ENCODE measurements at regions of chr1 and their contacts with region 1.

Region 1: DNA sequence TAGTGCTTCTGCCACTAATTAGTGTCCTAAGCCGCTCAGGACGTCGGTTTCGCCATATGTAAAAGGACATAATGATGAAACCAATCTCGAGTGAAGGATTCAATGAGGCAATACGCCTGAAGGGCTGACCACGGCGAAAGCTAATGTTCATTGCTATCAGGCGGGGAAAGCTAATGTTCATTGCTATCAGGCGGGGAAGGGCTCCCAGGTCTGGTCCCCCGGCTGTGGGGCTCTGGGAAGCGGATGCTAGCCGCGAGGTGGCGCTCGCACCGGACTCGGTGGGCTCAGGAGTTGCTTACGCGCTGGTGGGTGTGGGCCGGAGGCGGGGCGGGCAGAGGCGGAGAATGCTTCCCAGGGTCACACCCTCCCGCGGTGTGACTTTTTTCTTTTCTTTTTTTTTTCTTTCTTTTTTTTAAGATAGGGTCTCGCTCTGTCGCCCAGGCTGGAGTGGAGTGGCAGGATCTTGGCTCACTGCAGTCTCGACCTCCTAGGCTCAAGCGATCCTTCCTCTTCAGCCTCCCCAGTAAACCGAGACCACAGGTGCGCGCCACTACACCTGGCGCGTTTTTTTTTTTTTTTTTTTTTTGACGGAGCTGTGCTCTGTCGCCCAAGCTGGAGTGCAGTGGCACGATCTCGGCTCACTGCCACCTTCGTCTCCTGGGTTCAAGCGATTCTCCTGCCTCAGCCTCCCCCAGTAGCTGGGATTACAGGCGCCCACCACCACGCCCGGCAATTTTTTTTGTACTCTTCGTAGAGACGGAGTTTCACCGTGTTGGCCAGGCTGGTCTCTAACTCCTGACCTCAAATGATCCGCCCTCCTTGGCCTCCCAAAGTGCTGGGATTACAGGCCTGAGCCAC is 1.1 kb upstream of the PEAR1 start:
- DNase-seq: peak; percentile 71 to 92 (median 78)
- ATAC-seq: peak; percentile 92
- H3K4me3 ChIP-seq: peak overlapping the region; percentile 42
- H3K4me3 Mint-ChIP-seq: peak overlapping the region; percentile 82
- H3K27ac ChIP-seq: no peak overlapping the region
- H3K27ac Mint-ChIP-seq: no peak overlapping the region
- H3K4me1 ChIP-seq: peaks cover 29% of the 10 kb centered on the region
- H3K4me1 Mint-ChIP-seq: peaks cover 16% of the 10 kb centered on the region
- H3K27me3 ChIP-seq: peaks cover 39 to 51% of the 10 kb centered on the region in 2 experiments
- H3K27me3 Mint-ChIP-seq: peaks cover 73% of the 10 kb centered on the region
- CTCF ChIP-seq: peak; percentile 76

Region 2: DNA sequence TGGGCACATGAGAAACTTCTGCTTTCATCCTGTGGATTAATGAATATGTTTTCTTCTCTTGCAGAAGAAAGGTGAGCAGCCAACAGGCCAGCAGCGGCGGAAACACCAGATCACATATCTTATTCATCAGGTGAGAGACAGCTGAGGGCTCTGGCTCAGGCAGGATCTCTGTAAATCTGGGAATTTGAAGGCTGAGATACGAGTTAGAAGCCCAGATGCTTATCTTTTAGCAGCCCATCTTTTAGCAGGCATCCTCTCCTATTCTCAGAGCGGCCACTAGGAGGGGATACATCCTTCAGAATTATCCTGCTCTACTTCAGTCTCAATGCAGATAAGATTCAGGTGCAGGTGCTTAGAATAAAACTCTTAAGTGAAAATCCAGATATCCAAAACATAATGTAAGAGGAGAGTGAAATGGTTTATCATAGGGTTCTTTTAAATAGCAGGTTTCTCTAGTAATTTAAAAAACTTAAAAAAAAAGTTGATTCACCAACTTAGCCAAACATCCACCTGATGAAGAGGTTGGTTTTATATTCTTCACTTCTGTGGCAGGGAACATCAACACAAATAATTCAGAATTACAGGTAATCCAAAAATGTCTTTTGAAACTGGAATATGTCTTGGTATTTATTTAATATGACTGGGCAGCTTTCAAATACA is 95.1 kb before region 1 on chr1:
- CTCF ChIA-PET with region 1: interaction called, 7 read pairs
- POLR2A ChIA-PET with region 1: no interaction called
- intact Hi-C with region 1: loop called (anchors 1 kb)
- DNase-seq: peak in 13 of 14 experiments; percentile 26 to 84 (median 58)
- ATAC-seq: peak; percentile 92
- H3K4me3 ChIP-seq: no peak overlapping the region
- H3K4me3 Mint-ChIP-seq: no peak overlapping the region
- H3K27ac ChIP-seq: no peak overlapping the region
- H3K27ac Mint-ChIP-seq: peak overlapping the region; percentile 5
- H3K4me1 ChIP-seq: peaks cover 21% of the 10 kb centered on the region
- H3K4me1 Mint-ChIP-seq: peaks cover 8% of the 10 kb centered on the region
- H3K27me3 ChIP-seq: no peaks in the 10 kb centered on the region
- H3K27me3 Mint-ChIP-seq: no peaks in the 10 kb centered on the region
- CTCF ChIP-seq: peak; percentile 79

Region 3: GRCh38 chr1:156838981-156839410 is 53.4 kb before region 1 on chr1:
- CTCF ChIA-PET with region 1: interaction called, 19 read pairs
- POLR2A ChIA-PET with region 1: no interaction called
- intact Hi-C with region 1: loop called (anchors 1 to 5 kb)
- DNase-seq: peak in 11 of 14 experiments; percentile 34 to 74 (median 42)
- ATAC-seq: peak; percentile 84
- H3K4me3 ChIP-seq: no peak overlapping the region
- H3K4me3 Mint-ChIP-seq: no peak overlapping the region
- H3K27ac ChIP-seq: no peak overlapping the region
- H3K27ac Mint-ChIP-seq: no peak overlapping the region
- H3K4me1 ChIP-seq: peaks cover 24% of the 10 kb centered on the region
- H3K4me1 Mint-ChIP-seq: peaks cover 12% of the 10 kb centered on the region
- H3K27me3 ChIP-seq: peaks cover 27 to 37% of the 10 kb centered on the region in 2 experiments
- H3K27me3 Mint-ChIP-seq: peaks cover 60% of the 10 kb centered on the region
- CTCF ChIP-seq: peak; percentile 85

Region 4: GRCh38 chr1:156927215-156928042 is 35.0 kb after region 1 on chr1:
- CTCF ChIA-PET with region 1: interaction called, 11 read pairs
- POLR2A ChIA-PET with region 1: no interaction called
- intact Hi-C with region 1: loop called (anchors 1 to 2 kb)
- DNase-seq: peak; percentile 43 to 78 (median 58)
- ATAC-seq: peak; percentile 84
- H3K4me3 ChIP-seq: peak overlapping the region; percentile 9
- H3K4me3 Mint-ChIP-seq: no peak overlapping the region
- H3K27ac ChIP-seq: no peak overlapping the region
- H3K27ac Mint-ChIP-seq: no peak overlapping the region
- H3K4me1 ChIP-seq: peaks cover 24% of the 10 kb centered on the region
- H3K4me1 Mint-ChIP-seq: peaks cover 37% of the 10 kb centered on the region
- H3K27me3 ChIP-seq: peaks cover 57 to 81% of the 10 kb centered on the region in 2 experiments
- H3K27me3 Mint-ChIP-seq: peaks cover 94% of the 10 kb centered on the region
- CTCF ChIP-seq: peak; percentile 58

Region 5: DNA sequence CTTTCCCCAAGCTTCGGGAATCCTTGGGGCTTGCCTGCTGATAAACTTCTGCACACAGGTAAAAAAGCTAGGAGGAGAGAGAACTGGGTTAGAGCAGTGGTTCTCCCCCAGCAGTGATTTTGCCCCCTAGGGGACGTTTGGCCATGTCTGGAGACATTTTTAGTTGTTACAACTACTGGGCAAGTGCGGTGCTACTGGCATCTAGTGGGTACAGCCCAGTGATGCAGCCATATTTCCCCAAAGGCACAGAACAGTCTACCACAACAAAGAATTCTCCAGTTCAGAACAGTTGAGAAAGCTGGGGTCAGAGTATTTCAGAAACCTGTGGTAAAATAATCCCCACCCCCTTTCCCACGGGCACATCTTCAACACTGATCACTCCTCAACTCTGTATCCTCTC is 69.3 kb after region 1 on chr1:
- CTCF ChIA-PET with region 1: interaction called, 3 read pairs
- POLR2A ChIA-PET with region 1: no interaction called
- intact Hi-C with region 1: loop called (anchors 5 kb)
- DNase-seq: peak in 9 of 14 experiments; percentile 2 to 64 (median 35)
- ATAC-seq: peak; percentile 81
- H3K4me3 ChIP-seq: no peak overlapping the region
- H3K4me3 Mint-ChIP-seq: peak overlapping the region; percentile 72
- H3K27ac ChIP-seq: no peak overlapping the region
- H3K27ac Mint-ChIP-seq: peak overlapping the region; percentile 44
- H3K4me1 ChIP-seq: peaks cover 37% of the 10 kb centered on the region
- H3K4me1 Mint-ChIP-seq: peaks cover 55% of the 10 kb centered on the region
- H3K27me3 ChIP-seq: no peaks in the 10 kb centered on the region
- H3K27me3 Mint-ChIP-seq: no peaks in the 10 kb centered on the region
- CTCF ChIP-seq: peak; percentile 55